Activated CD4-positive, alpha-beta memory T cell treated with anti-CD3 and anti-CD28 coated beads for 36 hours (primary cell): ENCODE measurements at regions of chr5 and their contacts with region 1.

Region 1: DNA sequence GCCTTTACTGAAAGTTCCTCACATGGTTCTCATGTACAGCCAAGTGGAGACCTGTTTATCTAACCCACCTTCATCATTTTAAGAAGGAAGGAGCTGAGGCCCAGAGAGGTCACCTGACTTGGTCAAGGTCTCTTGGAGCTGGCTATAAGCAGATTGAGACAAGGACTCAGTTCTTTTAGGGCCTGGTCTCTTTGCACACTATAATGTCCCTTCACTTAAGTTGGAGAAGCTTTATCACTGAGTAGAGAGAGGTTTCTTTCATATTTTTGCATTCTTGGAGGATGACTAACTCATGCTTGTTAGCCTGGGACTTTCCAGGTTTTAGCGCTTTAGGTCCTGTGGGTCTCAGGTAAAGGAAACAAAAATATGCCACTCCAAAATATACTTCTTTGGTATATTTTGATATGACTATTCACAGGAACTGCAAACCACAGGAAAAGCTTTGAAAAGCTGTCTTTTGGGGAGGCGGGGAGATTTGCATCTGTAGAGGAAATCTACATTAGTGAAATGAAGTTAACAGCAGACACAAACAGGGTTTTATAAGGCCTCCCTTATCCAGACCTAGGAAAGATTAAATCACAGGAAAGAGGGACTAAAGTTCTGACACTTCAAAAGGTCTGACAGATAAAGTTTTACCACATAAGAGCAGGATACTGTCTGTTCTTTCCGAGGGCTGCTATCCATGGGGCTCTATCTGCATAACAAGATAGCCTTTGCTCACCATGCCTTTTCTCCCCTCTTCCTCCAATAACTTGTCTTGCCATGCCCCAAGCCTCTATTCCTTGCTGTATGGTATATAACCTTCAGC is 95.8 kb upstream of the ANKRD55 start:
- DNase-seq: peak; percentile 72
- H3K4me3 Mint-ChIP-seq: peak overlapping the region; percentile 6
- H3K27ac Mint-ChIP-seq: peak overlapping the region; percentile 91
- H3K4me1 Mint-ChIP-seq: peaks cover 70% of the 10 kb centered on the region
- H3K27me3 Mint-ChIP-seq: no peaks in the 10 kb centered on the region

Region 2: DNA sequence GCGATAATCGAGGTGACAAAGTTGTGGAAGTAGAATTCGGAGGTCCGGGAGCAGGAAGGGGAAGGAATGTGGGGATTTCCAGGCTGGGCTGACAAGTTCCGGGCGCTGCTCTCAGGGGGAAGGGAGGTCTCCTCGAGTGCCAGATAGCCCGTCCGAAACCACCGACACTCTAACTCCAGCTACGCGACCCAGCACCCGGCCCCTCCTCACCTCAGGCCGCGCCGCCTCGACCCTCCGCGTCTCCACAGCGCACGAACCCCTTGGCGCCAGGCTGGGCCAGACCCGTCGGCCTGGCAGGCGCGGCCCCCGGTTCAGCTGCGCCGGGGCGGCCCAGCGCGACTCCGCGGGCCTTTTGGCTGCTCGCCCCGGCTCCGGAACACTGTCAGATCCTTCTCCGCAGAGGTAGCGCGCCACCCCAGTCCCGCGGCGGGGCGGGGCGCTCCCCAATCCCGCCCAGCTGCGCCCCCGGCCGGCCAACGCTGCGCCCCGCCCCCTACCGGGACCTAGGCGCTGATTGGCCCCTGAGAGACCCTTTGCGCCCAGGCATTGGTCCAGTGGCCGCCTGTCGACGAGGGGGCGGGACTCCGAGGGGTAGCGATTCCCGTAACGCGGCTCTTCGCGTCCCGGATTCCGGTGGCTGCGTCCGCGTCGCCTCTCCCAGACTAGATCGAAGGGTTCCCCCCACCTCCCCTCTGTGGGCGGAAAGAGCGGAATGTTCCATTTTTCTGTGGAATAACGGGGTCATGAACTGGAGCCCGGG is 334.2 kb before region 1 on chr5 and contains the start of gene IL6ST:
- CTCF ChIA-PET with region 1: no interaction called
- POLR2A ChIA-PET with region 1: interaction called, 10 read pairs
- intact Hi-C with region 1: loop called (anchors 5 kb)
- DNase-seq: peak; percentile 97
- H3K4me3 Mint-ChIP-seq: peak within 1 kb of the TSS; percentile 99
- H3K27ac Mint-ChIP-seq: peak within 1 kb of the TSS; percentile 100
- H3K4me1 Mint-ChIP-seq: peaks cover 56% of the 10 kb centered on the region
- H3K27me3 Mint-ChIP-seq: no peaks in the 10 kb centered on the region
- total RNA-seq, gene IL6ST: 61.0 to 64.1 TPM

Region 3: DNA sequence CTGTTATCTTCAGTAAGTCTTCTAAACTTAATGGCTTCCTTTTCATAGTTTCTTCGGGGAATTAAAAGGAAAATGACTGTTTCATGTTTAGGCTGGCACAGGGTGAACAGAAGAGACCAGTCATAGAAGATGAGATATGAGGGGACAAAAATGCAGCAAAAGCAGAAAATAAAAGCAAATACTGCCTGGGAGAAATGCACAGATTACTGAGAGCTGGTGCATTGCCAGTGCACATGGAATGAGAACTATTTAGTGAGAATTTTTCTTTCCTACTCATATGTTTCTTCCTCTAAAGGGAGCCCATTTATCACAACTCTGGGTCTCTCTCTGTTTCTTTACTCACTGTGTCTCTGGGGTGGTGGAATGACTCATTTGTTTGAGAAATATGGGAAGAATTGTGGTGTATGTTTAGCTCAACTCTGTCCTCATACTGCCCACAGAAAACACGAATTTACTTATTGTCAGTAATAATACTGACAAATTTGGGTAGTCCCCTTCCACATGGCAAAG is 69.9 kb before region 1 on chr5:
- CTCF ChIA-PET with region 1: no interaction called
- POLR2A ChIA-PET with region 1: interaction called, 3 read pairs
- intact Hi-C with region 1: loop called (anchors 1 kb)
- DNase-seq: no peak
- H3K4me3 Mint-ChIP-seq: no peak overlapping the region
- H3K27ac Mint-ChIP-seq: peak overlapping the region; percentile 1
- H3K4me1 Mint-ChIP-seq: no peaks in the 10 kb centered on the region
- H3K27me3 Mint-ChIP-seq: peaks cover 3% of the 10 kb centered on the region

Region 4: GRCh38 chr5:56429082-56429891 is 100.3 kb after region 1 on chr5:
- CTCF ChIA-PET with region 1: no interaction called
- POLR2A ChIA-PET with region 1: no interaction called
- intact Hi-C with region 1: no loop called
- DNase-seq: no peak
- H3K4me3 Mint-ChIP-seq: no peak overlapping the region
- H3K27ac Mint-ChIP-seq: no peak overlapping the region
- H3K4me1 Mint-ChIP-seq: no peaks in the 10 kb centered on the region
- H3K27me3 Mint-ChIP-seq: no peaks in the 10 kb centered on the region

Region 5: DNA sequence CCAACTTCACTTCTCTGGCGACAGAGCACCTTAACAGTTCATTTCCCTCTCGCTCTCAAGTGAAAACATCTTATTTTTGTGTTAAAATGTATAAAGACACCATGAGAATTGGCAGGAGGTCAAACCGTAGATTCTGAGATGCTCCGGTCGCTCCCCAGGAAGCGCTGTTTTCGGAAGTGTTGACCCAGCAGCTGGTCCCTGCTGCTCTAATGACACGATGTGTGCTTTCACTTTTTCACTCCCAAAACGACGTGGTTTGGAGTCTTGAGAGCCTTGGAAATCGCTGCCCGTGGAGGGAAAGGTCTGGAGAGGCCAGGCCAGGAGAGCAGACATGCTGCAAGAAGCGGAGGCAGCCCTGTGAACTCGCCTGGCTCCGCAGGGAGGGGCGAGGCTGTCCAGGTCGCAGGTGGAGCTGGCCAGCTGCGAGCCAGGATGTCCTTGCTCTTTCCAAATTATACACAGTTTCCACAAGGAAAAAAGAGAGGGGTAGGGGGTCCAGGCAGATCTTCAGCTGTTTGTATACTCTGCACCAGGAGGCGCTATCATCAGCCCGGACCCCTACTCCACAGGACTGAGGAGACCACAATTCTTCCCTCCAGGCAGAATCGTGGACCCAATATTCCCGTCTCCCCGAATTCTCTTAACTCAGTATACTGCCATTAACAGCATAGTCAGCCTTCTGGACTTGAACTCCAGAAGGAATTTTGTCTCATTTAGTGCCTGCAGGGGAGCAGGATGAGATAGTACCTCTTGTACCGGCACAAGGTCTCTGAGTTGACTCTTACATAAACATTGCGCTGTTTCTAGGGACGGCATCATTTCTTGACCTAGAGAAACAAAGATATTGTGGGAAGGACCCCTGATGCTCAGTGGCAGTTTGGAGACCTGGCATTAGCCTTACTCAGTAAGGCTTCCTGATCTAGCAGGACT is 152.7 kb after region 1 on chr5:
- CTCF ChIA-PET with region 1: no interaction called
- POLR2A ChIA-PET with region 1: interaction called, 6 read pairs
- intact Hi-C with region 1: loop called (anchors 1 kb)
- DNase-seq: peak; percentile 32
- H3K4me3 Mint-ChIP-seq: peak overlapping the region; percentile 75
- H3K27ac Mint-ChIP-seq: peak overlapping the region; percentile 75
- H3K4me1 Mint-ChIP-seq: peaks cover 41% of the 10 kb centered on the region
- H3K27me3 Mint-ChIP-seq: no peaks in the 10 kb centered on the region

Region 6: GRCh38 chr5:56710826-56711590 is 382.1 kb after region 1 on chr5:
- CTCF ChIA-PET with region 1: no interaction called
- POLR2A ChIA-PET with region 1: no interaction called
- intact Hi-C with region 1: loop called (anchors 2 kb)
- DNase-seq: peak; percentile 40
- H3K4me3 Mint-ChIP-seq: no peak overlapping the region
- H3K27ac Mint-ChIP-seq: peak overlapping the region; percentile 11
- H3K4me1 Mint-ChIP-seq: peaks cover 26% of the 10 kb centered on the region
- H3K27me3 Mint-ChIP-seq: no peaks in the 10 kb centered on the region

Region 7: DNA sequence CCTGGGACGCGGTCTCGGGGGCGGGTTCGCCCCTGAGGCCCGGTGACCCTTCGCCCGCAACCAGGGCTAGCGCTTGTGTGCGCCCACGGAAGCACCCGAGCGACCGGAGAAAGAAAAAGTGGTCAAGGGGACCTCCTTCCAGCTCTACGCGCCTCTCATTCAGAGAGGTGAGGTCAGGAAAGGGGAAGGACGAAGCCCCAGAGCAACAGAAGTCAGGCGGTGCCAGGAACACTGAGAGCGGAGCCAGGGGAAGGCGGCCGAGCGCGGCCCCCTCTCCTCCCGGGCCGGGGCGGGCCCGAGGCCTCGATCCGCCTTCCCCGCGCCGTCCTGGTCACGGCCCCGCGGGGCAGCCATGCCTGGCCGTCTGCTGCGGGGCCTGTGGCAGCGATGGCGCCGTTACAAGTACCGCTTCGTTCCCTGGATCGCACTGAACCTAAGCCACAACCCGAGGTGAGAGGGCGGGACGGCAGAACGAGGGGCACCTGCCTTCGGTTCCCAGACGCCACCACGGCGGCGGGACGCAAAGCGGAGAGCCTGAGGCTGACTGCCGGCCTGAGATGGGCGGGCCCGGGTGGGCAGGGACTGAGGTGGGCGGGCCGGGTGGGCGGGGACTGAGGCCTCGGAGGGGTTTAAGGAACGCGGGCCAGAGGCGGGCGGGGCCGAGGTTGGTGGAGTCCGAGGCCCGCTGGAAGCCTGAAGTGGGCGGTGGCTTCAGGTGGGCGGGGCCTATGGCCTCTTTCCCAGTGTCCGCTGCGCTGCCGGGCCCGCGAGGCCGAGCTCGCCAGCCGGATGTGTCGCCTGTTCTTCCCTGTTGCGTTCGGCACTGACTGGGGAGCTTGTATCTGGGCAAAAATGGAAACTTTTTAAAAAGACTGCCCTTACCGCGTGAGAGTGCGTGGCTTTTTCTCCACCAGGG is 580.6 kb after region 1 on chr5 and contains the start of gene SETD9:
- CTCF ChIA-PET with region 1: no interaction called
- POLR2A ChIA-PET with region 1: no interaction called
- intact Hi-C with region 1: loop called (anchors 5 kb)
- DNase-seq: peak; percentile 97
- H3K4me3 Mint-ChIP-seq: peak within 1 kb of the TSS; percentile 77
- H3K27ac Mint-ChIP-seq: peak within 1 kb of the TSS; percentile 94
- H3K4me1 Mint-ChIP-seq: peaks cover 20% of the 10 kb centered on the region
- H3K27me3 Mint-ChIP-seq: no peaks in the 10 kb centered on the region
- total RNA-seq, gene SETD9: 5.1 to 7.4 TPM